GM13976 (cell line): ENCODE measurements at regions of chr6 and their contacts with region 1.

Region 1: DNA sequence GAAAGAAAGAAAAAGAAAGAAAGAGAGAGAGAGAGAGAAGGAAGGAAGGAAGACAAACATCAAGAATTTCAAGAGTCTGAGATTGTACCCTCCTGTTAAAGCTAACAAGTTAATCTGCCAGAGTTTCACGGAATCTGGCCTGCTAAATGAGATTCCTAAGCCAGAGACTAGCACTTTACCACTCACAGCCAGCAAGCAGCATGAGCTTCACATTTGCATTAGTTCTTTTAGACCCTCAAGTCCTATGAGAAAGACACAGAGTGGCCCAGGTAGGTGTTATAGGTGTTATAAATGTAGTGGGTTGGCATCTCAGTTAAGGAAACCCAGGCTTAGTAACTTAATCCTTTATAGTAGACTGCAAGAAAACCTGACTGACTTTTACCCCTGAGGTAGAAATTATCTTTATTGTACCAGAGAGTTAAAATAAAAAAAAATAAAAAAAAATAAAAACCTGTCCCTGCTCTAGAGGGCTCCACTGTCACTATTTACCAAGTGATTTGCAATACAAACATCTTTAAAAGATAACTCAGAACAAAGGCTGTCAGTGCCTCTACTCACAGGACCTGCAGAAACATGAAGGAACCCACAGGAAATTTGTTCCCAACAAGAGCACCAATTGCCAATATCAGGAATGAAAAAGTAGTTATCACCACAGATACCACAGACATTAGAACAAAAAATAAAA is 9.7 kb upstream of the IBTK start:
- DNase-seq: no peak
- CTCF ChIP-seq: no peak

Region 2: GRCh38 chr6:83057705-83058321 is 800.6 kb after region 1 on chr6:
- in situ Hi-C with region 1: loop called (anchors 5 kb)
- DNase-seq: peak; percentile 34
- CTCF ChIP-seq: peak; percentile 72